ENCODE measurements at regions of chr22 and their contacts with region 1.

Region 1: GRCh38 chr22:44616882-44617655 is 84.9 kb upstream of the PRR5 start:
- DNase-seq: peak in 1 of 2 donors; percentile 12
- H3K4me3 ChIP-seq: no peak overlapping the region
- H3K27ac ChIP-seq: no peak overlapping the region
- H3K4me1 ChIP-seq: no peaks in the 10 kb centered on the region
- H3K27me3 ChIP-seq: no peaks in the 10 kb centered on the region
- CTCF ChIP-seq: no peak
- POLR2A ChIP-seq: no peak

Region 2: DNA sequence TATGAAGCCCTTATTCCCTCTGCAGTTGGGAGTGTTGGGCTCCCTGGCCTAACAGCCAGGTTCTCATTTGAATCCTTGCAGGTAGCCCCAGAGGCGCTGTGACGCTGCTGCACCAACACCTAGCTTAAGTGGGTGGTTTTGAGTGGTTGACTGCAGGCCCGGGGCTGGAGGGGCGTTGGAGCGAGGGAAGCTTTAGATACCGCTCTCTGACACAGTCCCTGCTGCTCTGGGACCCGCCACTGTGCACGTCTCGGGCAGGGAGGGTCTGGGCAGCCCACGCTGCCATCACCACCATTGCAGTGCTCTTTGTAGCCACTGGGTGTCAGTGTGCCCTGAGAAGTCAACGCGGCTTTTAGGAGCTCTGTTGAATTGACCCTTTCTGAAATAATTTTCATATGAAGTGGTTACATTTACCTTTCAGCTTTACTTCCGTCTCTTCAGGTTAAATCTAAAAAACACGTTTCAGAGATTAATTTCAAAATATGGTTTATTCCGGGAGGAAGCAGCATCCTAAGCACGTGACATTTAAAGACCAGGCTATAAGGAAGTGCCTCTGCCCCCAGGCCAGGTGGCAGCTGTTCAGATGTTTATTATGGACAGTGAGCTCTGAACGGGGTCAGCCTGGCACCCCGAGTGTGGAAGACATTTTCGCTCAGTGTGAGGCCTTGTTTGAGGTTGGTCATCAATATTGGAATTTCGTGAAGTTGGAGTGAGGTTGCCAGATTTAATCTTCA is 623.9 kb before region 1 on chr22:
- intact Hi-C with region 1: loop called (anchors 5 kb)
- DNase-seq: peak; percentile 49 to 51
- H3K4me3 ChIP-seq: no peak overlapping the region
- H3K27ac ChIP-seq: no peak overlapping the region
- H3K4me1 ChIP-seq: no peaks in the 10 kb centered on the region
- H3K27me3 ChIP-seq: no peaks in the 10 kb centered on the region
- CTCF ChIP-seq: peak; percentile 73 to 95 (median 84)
- POLR2A ChIP-seq: no peak

Region 3: DNA sequence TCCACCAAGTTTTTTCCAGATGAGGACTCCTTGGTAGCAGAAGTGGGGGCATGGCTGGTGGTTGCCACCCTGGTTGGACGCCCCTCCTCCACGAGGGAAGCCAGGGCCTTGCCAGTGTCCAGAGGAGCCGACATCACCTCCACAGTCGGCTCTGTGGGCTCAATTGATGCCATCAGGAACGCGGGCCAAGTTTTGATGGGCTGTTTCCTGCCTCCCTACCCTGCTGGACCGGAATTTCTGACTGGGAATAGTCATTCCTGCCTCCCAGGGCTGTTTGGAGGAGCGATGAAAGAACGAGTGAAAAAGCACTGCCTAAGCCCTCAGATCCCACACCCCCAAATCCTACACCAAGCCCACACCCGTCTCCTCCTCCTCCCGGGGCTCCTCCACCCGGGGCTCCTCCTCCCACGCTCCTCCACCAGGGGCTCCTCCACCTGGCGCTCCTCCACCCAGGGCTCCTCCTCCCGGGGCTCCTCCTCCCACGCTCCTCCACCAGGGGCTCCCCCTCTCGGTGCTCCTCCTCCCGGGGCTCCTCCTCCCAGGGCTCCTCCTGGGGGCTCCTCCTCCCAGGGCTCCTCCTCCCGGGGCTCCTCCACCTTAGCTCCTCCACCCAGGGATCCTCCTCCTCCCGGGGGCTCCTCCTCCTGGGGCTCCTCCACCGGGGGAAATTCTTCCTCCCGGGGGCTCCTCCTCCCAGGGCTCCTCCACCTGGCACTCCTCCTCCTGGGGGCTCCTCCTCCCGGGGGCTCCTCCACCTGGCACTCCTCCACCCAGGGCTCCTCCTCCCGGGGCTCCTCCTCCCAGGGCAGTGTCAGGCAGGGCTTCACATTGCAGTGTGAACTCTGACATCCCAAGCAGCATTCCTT is 75.0 kb after region 1 on chr22:
- intact Hi-C with region 1: no loop called
- DNase-seq: no peak
- H3K4me3 ChIP-seq: no peak overlapping the region
- H3K27ac ChIP-seq: no peak overlapping the region
- H3K4me1 ChIP-seq: no peaks in the 10 kb centered on the region
- H3K27me3 ChIP-seq: no peaks in the 10 kb centered on the region
- CTCF ChIP-seq: no peak
- POLR2A ChIP-seq: no peak

Measured in thyroid gland (tissue), 4 donors.